Head of caudate nucleus (tissue), 42 donors: ENCODE measurements at regions of chr15 and their contacts with region 1.

Region 1: DNA sequence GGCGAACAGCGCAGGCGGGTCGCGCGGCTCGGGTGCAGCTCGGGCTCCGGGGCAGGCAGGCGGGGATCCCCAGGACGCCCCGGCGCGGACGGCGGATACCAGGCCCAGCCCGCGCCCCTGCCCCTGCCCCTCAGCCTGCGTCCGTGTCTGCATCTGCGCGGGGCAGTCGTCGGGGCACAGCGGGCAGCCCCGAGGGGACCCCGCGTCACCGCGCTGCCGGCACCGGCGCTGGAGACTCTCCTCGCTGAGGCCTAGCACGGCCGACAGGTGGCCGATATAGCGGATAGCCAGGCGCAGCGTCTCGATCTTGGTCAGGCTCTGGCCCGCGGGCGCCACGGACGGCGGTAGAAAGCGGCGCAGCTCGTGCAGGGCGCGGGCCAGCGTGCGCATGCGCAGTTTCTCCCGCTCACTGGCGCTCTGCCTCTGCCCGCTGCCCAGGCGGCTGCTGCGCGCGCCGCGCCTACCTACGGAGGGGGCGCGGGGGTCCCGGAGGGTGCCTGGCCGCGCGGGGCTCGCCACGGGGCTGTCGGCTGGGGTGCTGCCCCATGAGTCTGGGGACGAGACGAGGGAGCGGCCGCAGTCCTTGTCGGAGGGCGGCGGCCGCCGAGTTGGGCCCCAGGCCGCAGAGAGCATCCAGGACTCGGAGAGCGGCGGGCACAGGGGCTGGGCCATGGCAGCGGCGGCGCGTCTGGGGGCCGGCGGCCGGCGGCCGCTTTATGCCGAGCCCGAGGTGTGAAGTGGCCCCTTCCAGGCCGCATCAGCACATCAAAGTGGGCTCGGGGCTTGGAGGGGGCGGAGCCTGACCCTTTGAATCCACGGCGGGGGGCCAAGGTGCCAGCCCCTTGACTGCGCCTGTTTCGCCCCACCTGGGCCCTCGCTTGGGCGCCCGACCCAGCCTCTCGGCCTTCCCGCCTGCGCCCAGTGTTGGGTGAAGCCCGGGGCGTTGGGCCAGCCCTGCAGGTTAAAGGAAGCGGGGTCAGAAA is at the start of gene MESP1:
- DNase-seq: peak; percentile 74 to 96 (median 90)

Region 2: GRCh38 chr15:90071208-90071807 is 320.5 kb after region 1 on chr15:
- intact Hi-C with region 1: loop called (anchors 10 kb)
- DNase-seq: peak; percentile 63 to 92 (median 84)